ENCODE measurements at regions of chr2 and their contacts with region 1.

Region 1: DNA sequence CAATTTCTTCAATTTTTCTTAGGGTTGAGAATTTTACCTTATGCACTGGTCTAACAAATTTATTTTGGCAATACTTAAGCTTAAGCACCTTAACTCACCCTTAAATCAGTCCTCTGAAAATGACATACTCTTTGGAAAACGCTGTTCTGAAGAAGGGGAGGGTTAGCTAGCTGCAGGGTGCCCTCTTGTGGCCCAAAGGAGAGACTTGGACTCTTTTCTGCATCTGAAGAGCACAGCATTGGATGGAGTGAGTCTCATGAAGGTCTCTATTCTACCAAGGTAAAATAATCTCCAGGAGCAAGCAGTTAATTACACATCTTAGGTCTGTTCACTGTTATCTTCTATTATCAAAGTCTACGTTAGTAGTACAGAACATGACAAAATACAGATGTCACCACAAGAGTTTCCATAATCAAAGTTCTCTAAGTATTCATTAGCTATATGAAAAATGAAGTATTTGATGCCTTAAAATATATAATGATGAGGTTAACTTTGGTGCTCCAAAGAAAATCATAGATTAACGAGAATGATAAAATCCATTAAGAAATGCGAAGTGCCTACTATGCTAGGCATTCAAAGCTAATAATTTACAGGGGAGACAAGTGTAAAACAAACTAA is 24.4 kb downstream of the PUM2 start:
- DNase-seq: peak; percentile 71
- ATAC-seq: peak; percentile 90
- H3K4me3 Mint-ChIP-seq: no peak overlapping the region
- H3K27ac Mint-ChIP-seq: peak overlapping the region; percentile 7
- H3K4me1 Mint-ChIP-seq: peaks cover 80% of the 10 kb centered on the region
- H3K27me3 Mint-ChIP-seq: no peaks in the 10 kb centered on the region

Region 2: DNA sequence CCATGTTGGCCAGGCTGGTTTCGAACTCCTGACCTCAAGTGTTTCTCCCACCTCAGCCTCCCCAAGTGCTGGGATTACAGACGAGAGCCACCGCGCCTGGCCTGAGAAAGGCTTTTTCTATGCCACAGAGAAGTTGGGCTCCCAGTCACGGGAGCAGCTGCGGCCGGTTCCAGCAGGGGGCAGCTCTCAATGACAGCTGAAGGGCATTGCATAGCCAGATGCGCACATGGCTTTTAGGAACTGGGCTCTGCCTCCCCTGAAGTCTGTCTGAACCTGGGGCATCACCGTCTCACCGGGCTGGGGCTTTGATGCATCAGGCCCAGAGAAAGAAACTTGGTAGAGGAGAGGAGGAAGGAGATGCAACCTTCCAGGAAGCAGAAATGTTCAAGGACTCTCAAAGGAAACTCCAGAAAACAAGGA is 190.6 kb before region 1 on chr2:
- CTCF ChIA-PET with region 1: no interaction called
- POLR2A ChIA-PET with region 1: no interaction called
- intact Hi-C with region 1: loop called in 1 of 2 experiments (anchors 10 kb)
- DNase-seq: peak; percentile 72
- ATAC-seq: peak; percentile 71
- H3K4me3 Mint-ChIP-seq: no peak overlapping the region
- H3K27ac Mint-ChIP-seq: no peak overlapping the region
- H3K4me1 Mint-ChIP-seq: no peaks in the 10 kb centered on the region
- H3K27me3 Mint-ChIP-seq: peaks cover 8% of the 10 kb centered on the region

Region 3: GRCh38 chr2:20288642-20289340 is 37.5 kb before region 1 on chr2:
- CTCF ChIA-PET with region 1: interaction called, 20 read pairs
- POLR2A ChIA-PET with region 1: no interaction called
- intact Hi-C with region 1: no loop called
- DNase-seq: no peak
- ATAC-seq: no peak
- H3K4me3 Mint-ChIP-seq: no peak overlapping the region
- H3K27ac Mint-ChIP-seq: no peak overlapping the region
- H3K4me1 Mint-ChIP-seq: peaks cover 6% of the 10 kb centered on the region
- H3K27me3 Mint-ChIP-seq: no peaks in the 10 kb centered on the region

Region 4: GRCh38 chr2:20304411-20304810 is 21.9 kb before region 1 on chr2:
- CTCF ChIA-PET with region 1: interaction called, 18 read pairs
- POLR2A ChIA-PET with region 1: no interaction called
- intact Hi-C with region 1: no loop called
- DNase-seq: no peak
- ATAC-seq: no peak
- H3K4me3 Mint-ChIP-seq: no peak overlapping the region
- H3K27ac Mint-ChIP-seq: no peak overlapping the region
- H3K4me1 Mint-ChIP-seq: peaks cover 4% of the 10 kb centered on the region
- H3K27me3 Mint-ChIP-seq: no peaks in the 10 kb centered on the region

Region 5: GRCh38 chr2:20313659-20314058 is 12.6 kb before region 1 on chr2:
- CTCF ChIA-PET with region 1: interaction called, 16 read pairs
- POLR2A ChIA-PET with region 1: no interaction called
- intact Hi-C with region 1: no loop called
- DNase-seq: no peak
- ATAC-seq: peak; percentile 44
- H3K4me3 Mint-ChIP-seq: no peak overlapping the region
- H3K27ac Mint-ChIP-seq: no peak overlapping the region
- H3K4me1 Mint-ChIP-seq: peaks cover 26% of the 10 kb centered on the region
- H3K27me3 Mint-ChIP-seq: no peaks in the 10 kb centered on the region

Region 6: GRCh38 chr2:20378792-20379519 is 52.7 kb after region 1 on chr2:
- CTCF ChIA-PET with region 1: interaction called, 14 read pairs
- POLR2A ChIA-PET with region 1: no interaction called
- intact Hi-C with region 1: no loop called
- DNase-seq: peak; percentile 16
- ATAC-seq: peak; percentile 47
- H3K4me3 Mint-ChIP-seq: no peak overlapping the region
- H3K27ac Mint-ChIP-seq: no peak overlapping the region
- H3K4me1 Mint-ChIP-seq: no peaks in the 10 kb centered on the region
- H3K27me3 Mint-ChIP-seq: peaks cover 2% of the 10 kb centered on the region

Region 7: DNA sequence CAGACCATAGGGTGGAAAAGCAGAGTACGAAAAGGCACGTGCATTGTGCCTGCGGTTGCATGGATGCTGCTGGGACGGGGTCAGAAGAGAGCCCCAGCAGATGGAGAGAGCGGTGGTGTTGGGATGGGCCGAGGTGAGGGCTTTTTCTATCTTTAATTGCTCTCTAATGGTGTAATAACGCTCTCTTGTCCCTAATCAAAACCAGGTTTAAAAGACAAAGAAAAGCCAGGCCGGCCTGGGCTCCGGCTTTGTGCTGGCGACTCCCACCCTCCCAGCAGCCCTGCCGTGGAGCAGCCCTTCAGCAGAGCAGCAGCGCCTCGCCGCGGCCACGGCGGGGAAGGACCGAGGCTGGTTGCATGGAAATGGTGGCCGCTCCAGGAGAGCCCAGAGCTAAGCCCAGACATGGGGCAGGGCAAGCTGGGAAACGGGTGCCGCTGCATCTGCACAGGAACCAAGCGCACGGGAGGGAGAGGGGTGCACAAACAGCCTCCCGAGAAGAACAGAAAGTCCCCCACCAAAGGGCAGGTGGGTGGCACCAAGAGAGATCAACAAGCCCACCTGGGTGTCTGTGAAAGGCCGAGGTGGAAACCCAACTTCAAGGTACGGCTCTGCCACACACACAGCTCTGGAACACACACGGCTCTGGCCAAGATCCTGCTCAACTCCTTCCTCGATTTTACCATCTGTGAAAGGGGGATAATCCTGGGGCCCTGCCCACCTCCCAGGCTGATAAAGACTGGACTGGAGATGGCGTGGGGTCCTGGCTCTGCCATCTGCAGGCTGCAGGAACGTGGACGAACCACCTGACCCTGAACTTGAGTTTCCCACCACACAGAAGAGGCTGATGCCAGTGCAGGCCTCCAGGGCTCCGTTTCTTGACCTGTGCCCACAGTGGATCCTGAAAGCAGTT is 309.7 kb after region 1 on chr2:
- CTCF ChIA-PET with region 1: interaction called, 10 read pairs
- POLR2A ChIA-PET with region 1: no interaction called
- intact Hi-C with region 1: no loop called
- DNase-seq: peak; percentile 78
- ATAC-seq: peak; percentile 95
- H3K4me3 Mint-ChIP-seq: no peak overlapping the region
- H3K27ac Mint-ChIP-seq: no peak overlapping the region
- H3K4me1 Mint-ChIP-seq: no peaks in the 10 kb centered on the region
- H3K27me3 Mint-ChIP-seq: no peaks in the 10 kb centered on the region

Measured in activated CD4-positive, alpha-beta T cell treated with anti-CD3 and anti-CD28 coated beads for 36 hours (primary cell).